ENCODE measurements at regions of chr1 and their contacts with region 1.

Region 1: GRCh38 chr1:110619412-110620249 is 13.5 kb upstream of the KCNA2 start:
- DNase-seq: peak; percentile 89
- H3K4me3 Mint-ChIP-seq: peak overlapping the region; percentile 72
- H3K27ac Mint-ChIP-seq: no peak overlapping the region
- H3K4me1 Mint-ChIP-seq: peaks cover 23% of the 10 kb centered on the region
- H3K27me3 Mint-ChIP-seq: no peaks in the 10 kb centered on the region

Region 2: GRCh38 chr1:109751531-109752260 is 867.9 kb before region 1 on chr1:
- CTCF ChIA-PET with region 1: no interaction called
- intact Hi-C with region 1: no loop called
- DNase-seq: no peak
- H3K4me3 Mint-ChIP-seq: no peak overlapping the region
- H3K27ac Mint-ChIP-seq: no peak overlapping the region
- H3K4me1 Mint-ChIP-seq: no peaks in the 10 kb centered on the region
- H3K27me3 Mint-ChIP-seq: no peaks in the 10 kb centered on the region

Region 3: GRCh38 chr1:110203021-110203661 is 416.5 kb before region 1 on chr1:
- CTCF ChIA-PET with region 1: no interaction called
- intact Hi-C with region 1: loop called (anchors 2 kb)
- DNase-seq: peak; percentile 88
- H3K4me3 Mint-ChIP-seq: no peak overlapping the region
- H3K27ac Mint-ChIP-seq: peak overlapping the region; percentile 81
- H3K4me1 Mint-ChIP-seq: peaks cover 21% of the 10 kb centered on the region
- H3K27me3 Mint-ChIP-seq: no peaks in the 10 kb centered on the region

Region 4: DNA sequence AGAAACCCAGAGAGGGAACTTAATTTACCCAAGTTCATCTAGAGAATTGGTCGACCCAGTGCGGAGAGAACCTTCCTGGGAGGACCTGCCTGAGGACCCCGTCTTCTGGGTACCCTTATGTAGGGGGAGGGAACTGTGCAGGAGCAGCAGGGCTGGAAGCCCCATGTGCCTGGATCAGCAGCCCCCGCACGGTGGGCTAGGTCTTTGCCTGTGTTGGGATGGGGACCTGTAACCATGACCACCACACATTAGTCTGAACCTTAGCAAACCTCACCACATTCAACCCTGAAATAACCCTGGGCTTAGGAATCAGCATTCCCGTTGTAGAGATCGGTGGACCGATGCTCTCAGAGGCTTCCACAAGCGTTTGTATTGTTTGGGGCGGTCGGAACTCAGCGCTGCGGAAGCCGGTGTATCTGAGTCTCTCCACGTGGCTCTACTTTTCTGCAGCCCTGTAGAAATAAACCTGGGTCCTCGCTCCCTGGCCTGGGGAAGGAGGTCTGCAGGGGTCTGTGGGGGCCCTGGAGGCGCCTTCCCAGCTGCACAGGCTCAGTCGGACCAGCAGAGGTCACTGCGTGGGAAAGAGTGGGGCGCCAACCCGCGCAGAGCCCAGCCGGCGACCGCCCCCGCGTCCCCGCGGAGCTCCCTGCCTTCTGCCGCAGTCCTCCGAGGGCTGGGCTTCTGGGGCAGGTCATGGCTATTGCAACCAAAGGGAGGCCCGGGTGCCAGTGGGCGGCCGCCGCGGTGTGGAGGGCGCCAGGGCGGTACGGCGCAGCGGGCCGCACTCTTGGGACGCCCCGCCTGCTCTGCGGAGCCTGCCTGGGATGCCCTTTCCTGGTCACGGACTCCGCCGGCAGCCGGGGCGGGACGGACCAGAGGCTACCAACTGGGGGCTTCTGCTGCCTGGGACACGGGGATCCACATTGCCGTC is 64.5 kb before region 1 on chr1:
- CTCF ChIA-PET with region 1: interaction called, 18 read pairs
- intact Hi-C with region 1: loop called (anchors 1 kb)
- DNase-seq: peak; percentile 55
- H3K4me3 Mint-ChIP-seq: peak overlapping the region; percentile 22
- H3K27ac Mint-ChIP-seq: no peak overlapping the region
- H3K4me1 Mint-ChIP-seq: peaks cover 3% of the 10 kb centered on the region
- H3K27me3 Mint-ChIP-seq: peaks cover 41% of the 10 kb centered on the region

Region 5: DNA sequence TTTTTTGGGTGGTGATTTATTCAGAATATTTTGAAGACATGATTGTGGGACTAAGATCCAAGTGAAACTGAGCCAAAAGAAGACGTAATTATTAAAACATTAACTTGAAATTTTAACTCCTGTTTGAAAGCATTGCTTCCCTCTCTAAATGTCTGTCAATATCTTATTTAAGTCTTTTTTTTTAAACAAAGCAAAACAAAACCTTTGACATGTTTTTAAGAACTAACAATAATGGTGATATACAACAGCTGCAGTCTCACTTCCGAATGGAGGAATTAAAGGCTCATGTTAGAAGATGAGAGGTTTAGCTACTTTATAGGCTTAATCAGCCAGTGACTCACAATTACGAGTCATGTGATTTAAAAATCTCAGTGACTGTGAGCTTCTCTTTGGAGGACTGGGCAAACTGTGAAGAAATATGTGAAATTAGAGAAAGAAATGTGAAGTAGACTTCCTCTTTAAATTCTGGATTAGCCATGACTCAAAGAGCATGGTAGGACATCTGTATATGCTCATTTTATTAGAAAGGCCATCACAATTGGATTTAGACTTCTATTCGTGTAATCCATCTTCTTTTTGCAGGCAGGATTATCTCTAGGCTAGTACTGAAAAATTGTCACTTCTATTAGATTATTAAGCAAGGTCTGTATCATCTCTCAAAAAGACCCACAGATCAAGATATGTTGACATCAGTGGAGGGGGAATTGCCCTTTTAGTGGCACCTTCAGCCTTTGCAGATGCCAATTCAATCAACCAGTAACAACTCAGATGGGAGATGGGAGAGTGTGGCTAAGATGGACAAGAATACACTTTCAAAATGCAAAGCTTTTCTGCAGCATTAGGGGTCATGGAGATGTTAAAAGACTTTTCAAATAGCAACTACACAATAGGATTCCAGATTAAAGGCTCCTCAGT is 26.4 kb after region 1 on chr1:
- CTCF ChIA-PET with region 1: interaction called, 15 read pairs
- intact Hi-C with region 1: no loop called
- DNase-seq: no peak
- H3K4me3 Mint-ChIP-seq: peak overlapping the region; percentile 28
- H3K27ac Mint-ChIP-seq: no peak overlapping the region
- H3K4me1 Mint-ChIP-seq: peaks cover 55% of the 10 kb centered on the region
- H3K27me3 Mint-ChIP-seq: no peaks in the 10 kb centered on the region

Region 6: GRCh38 chr1:110700767-110701166 is 81.1 kb after region 1 on chr1:
- CTCF ChIA-PET with region 1: no interaction called
- intact Hi-C with region 1: no loop called
- DNase-seq: no peak
- H3K4me3 Mint-ChIP-seq: no peak overlapping the region
- H3K27ac Mint-ChIP-seq: no peak overlapping the region
- H3K4me1 Mint-ChIP-seq: no peaks in the 10 kb centered on the region
- H3K27me3 Mint-ChIP-seq: no peaks in the 10 kb centered on the region

Region 7: DNA sequence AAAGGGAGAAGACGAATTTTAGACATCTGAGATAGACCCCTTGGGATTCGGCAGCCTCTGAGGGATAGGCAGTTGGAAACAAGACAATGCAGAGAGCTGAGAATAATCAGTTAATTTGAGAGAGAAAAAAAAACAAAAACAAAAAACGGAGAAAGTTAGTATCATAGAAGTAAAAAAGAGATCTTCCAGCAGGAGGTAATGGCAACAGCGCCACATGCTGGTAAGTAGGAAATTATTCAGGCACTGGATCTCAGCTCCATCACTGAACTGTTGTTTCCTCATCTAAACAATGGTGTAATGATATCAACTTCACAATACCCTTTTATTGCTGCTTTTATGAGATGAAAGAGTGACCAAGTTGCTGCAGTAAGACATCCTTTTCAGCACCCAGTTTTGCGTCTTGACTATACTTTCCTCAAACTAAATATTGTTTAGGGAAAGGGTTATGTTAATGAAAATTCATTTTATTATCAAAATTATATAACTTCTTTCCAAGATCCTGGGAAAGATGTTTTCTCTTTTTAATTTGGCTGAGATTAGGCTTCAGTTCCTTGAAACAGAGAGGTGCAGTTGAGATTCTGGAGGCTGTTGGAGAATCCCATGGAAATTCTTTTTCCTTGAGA is 146.5 kb after region 1 on chr1:
- CTCF ChIA-PET with region 1: interaction called, 158 read pairs
- intact Hi-C with region 1: loop called (anchors 1 kb)
- DNase-seq: peak; percentile 75
- H3K4me3 Mint-ChIP-seq: no peak overlapping the region
- H3K27ac Mint-ChIP-seq: no peak overlapping the region
- H3K4me1 Mint-ChIP-seq: peaks cover 2% of the 10 kb centered on the region
- H3K27me3 Mint-ChIP-seq: peaks cover 2% of the 10 kb centered on the region

Region 8: GRCh38 chr1:110829955-110830553 is 210.4 kb after region 1 on chr1:
- CTCF ChIA-PET with region 1: no interaction called
- intact Hi-C with region 1: loop called (anchors 2 kb)
- DNase-seq: peak; percentile 36
- H3K4me3 Mint-ChIP-seq: no peak overlapping the region
- H3K27ac Mint-ChIP-seq: no peak overlapping the region
- H3K4me1 Mint-ChIP-seq: peaks cover 8% of the 10 kb centered on the region
- H3K27me3 Mint-ChIP-seq: no peaks in the 10 kb centered on the region